ENCODE measurements at regions of chr3 and their contacts with region 1.

Region 1: GRCh38 chr3:107206141-107206540 is 171.1 kb upstream of the CCDC54 start:
- DNase-seq: no peak
- H3K4me3 ChIP-seq: no peak overlapping the region
- H3K27ac ChIP-seq: no peak overlapping the region
- H3K4me1 ChIP-seq: peaks cover 0 to 9% (median 4%) of the 10 kb centered on the region in 4 donors
- H3K27me3 ChIP-seq: no peaks in the 10 kb centered on the region
- CTCF ChIP-seq: peak; percentile 19 to 43 (median 37)
- EP300 ChIP-seq: no peak
- POLR2A ChIP-seq: no peak

Region 2: DNA sequence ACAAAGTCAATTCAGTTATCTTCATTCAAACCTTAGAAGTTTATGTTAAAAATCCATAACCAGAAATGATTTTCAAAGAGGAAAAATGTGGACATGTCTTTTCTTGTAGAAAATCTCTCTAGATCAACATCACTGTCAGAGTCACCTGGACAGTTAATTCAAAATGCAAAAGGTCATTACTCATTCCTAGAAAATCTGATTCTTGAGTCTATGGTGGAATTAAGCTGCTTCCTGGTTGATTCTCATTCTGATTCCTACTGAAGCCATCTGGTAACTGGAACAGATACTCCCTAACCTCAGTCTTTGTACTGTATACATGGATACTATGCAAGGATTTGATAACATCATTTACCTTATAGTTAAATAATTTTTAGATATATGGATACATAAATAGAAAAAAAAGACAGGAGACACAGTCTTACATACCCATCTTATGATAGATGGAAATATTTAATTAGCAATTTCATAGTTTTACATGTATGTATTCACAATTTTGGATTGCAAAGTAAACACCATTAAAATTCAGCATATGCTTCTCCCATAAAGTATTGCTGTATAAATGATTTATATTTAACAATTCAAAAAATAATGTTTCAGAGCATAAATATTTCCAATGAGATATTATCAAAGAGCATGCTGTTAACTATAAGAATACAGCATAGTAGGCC is 522.1 kb before region 1 on chr3:
- in situ Hi-C with region 1: no loop called
- intact Hi-C with region 1: no loop called
- DNase-seq: no peak
- H3K4me3 ChIP-seq: no peak overlapping the region
- H3K27ac ChIP-seq: no peak overlapping the region
- H3K4me1 ChIP-seq: no peaks in the 10 kb centered on the region
- H3K27me3 ChIP-seq: no peaks in the 10 kb centered on the region
- CTCF ChIP-seq: no peak
- EP300 ChIP-seq: no peak
- POLR2A ChIP-seq: no peak

Region 3: GRCh38 chr3:107216711-107217110 is 10.6 kb after region 1 on chr3:
- in situ Hi-C with region 1: no loop called
- intact Hi-C with region 1: loop called (anchors 1 kb)
- DNase-seq: no peak
- H3K4me3 ChIP-seq: no peak overlapping the region
- H3K27ac ChIP-seq: no peak overlapping the region
- H3K4me1 ChIP-seq: no peaks in the 10 kb centered on the region
- H3K27me3 ChIP-seq: no peaks in the 10 kb centered on the region
- CTCF ChIP-seq: no peak
- EP300 ChIP-seq: no peak
- POLR2A ChIP-seq: no peak

Region 4: DNA sequence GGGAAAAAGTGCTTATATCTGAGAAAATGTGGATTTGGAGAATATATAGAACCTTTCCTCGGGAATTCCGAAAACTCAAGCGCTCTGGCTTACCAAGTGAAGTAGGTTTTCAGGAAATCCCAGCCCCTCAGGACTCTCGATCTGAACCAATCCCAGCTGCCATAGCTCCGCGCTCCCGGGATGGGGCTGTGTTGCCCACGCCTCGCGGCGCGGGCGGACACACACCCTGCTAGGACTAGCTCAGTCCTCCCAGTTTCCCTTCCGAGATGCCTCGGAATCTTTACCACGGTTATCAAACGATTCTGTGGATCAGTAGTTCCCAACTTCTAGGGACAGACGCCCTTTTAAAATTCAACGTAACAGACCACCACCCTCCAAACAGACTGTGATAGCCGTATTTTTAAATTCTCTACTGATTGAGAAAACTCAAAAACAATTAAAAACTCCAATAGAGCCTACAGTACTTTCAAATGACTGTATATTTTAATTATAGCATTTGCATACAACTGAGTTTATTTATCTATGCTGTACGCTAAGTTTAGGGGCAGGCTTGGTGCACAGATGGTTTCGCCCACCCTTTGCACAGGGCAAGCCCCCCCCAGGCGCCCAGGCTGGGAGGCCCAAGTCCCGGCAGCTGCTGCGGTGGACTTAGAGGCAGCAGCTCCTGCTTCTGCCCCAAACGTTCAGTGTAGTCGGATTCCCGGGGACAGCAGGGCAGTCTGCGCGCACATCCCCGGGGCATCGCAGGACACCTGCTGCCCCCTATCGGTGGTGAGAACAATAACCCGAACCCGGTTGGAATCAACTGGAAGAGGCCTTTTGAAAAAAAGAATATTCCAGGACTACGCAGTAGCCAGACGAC is 223.4 kb after region 1 on chr3:
- in situ Hi-C with region 1: no loop called
- intact Hi-C with region 1: no loop called
- DNase-seq: peak; percentile 75
- H3K4me3 ChIP-seq: peak overlapping the region; percentile 14 to 96 (median 44)
- H3K27ac ChIP-seq: peak overlapping the region; percentile 91 to 98 (median 94)
- H3K4me1 ChIP-seq: peaks cover 0 to 29% (median 15%) of the 10 kb centered on the region in 4 donors
- H3K27me3 ChIP-seq: no peaks in the 10 kb centered on the region
- CTCF ChIP-seq: peak; percentile 79 to 90 (median 86)
- EP300 ChIP-seq: no peak
- POLR2A ChIP-seq: no peak

Measured in transverse colon (tissue), 4 donors.